ENCODE measurements at regions of chr20 and their contacts with region 1.

Region 1: DNA sequence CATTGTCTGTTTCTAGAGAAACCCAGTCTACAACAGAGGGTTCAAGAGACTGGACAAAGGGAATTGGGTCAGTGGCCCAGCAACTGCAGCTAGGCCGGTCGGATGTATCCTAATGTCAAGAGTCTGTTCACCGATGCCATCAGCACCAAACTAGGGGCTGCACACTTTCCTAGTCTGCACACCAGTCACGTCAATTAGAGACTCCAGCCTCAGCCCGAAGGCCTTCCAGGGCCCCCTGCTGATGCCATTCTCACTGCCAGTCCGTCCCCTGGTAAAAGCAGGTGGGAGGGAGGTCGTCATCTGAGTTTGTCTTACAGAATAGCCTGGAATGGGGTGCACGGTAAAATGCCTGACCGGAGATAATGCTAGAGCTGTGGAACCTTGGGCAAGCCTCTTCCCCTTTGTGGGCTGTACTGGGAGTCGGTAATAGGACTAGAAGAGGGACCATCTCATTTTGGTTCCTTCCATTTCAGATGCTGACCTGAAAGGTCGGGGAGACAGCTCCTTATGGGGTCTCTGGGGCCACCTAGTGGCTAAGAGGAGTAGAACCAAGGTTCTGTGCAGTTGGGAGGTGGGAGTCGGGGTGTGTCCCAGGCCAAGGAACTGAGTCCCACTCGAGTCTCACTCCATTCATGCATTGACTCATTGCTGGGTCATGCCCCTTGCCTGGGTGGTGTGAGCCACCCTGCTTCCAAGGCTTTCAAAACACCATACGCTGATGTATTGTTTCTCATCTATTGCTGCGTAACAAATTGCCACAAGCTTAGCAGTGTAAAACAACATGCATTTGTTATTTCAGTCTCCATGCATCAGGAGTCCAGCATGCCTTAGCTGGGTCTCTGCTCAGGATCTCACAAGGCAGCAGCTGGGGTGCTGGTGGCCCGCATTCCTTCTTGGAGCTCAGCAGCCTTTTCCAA is 5.1 kb downstream of the SOX12 start:
- DNase-seq: peak; percentile 71
- ATAC-seq: peak; percentile 27
- H3K4me3 ChIP-seq: no peak overlapping the region
- H3K27ac ChIP-seq: no peak overlapping the region
- H3K4me1 ChIP-seq: peaks cover 34% of the 10 kb centered on the region
- H3K27me3 ChIP-seq: no peaks in the 10 kb centered on the region; a peak in 1 of 5 replicates
- CTCF ChIP-seq: peak; percentile 96
- EP300 ChIP-seq: no peak
- POLR2A ChIP-seq: peak in 1 of 2 experiments; percentile 47; a peak in 2 of 4 replicates
- RAD21 ChIP-seq: peak; percentile 92

Region 2: DNA sequence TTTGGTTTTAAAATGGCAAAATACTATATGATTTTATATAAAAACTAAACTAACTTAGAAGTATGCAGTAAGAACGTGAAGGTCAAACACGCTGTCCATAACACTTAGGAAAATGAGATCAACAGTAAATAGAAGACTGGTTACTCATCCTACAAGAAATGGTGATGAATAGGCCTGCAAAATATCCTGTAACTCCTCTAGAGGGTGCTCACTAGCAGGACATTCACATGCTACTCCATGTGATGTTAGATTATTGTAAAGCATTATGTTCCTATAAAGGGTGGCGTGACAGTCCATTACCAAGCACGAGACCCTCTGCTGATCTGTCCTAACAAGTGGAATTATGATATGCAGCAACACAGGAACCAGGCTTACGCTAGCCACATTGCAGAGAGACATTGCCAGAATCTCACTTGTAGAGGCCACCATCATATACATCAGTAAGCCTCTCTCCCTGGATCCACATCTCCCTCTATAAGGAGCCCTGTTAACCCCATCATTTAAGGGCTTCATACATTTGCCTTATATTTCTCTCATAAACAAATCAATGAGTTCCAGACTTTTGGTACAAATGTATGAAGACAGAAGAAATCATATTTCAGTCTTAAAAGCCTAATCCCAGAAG is 121.4 kb before region 1 on chr20:
- CTCF ChIA-PET with region 1: interaction called, 8 read pairs
- POLR2A ChIA-PET with region 1: no interaction called
- in situ Hi-C with region 1: no loop called
- intact Hi-C with region 1: loop called (anchors 1 kb)
- DNase-seq: peak; percentile 64
- ATAC-seq: peak; percentile 92
- H3K4me3 ChIP-seq: no peak overlapping the region
- H3K27ac ChIP-seq: no peak overlapping the region
- H3K4me1 ChIP-seq: no peaks in the 10 kb centered on the region
- H3K27me3 ChIP-seq: peaks cover 1 to 27% of the 10 kb centered on the region in 2 experiments; a peak in 4 of 5 replicates
- CTCF ChIP-seq: peak; percentile 85
- EP300 ChIP-seq: no peak
- POLR2A ChIP-seq: no peak
- RAD21 ChIP-seq: peak; percentile 47

Region 3: GRCh38 chr20:237489-237888 is 93.0 kb before region 1 on chr20:
- CTCF ChIA-PET with region 1: no interaction called
- POLR2A ChIA-PET with region 1: no interaction called
- in situ Hi-C with region 1: no loop called
- intact Hi-C with region 1: no loop called
- DNase-seq: no peak
- ATAC-seq: no peak
- H3K4me3 ChIP-seq: no peak overlapping the region
- H3K27ac ChIP-seq: no peak overlapping the region
- H3K4me1 ChIP-seq: no peaks in the 10 kb centered on the region
- H3K27me3 ChIP-seq: peaks cover 2 to 15% of the 10 kb centered on the region in 2 experiments; a peak in 3 of 5 replicates
- CTCF ChIP-seq: no peak
- EP300 ChIP-seq: no peak
- POLR2A ChIP-seq: no peak
- RAD21 ChIP-seq: no peak

Region 4: GRCh38 chr20:258963-259362 is 71.5 kb before region 1 on chr20:
- CTCF ChIA-PET with region 1: interaction called, 12 read pairs
- POLR2A ChIA-PET with region 1: no interaction called
- in situ Hi-C with region 1: no loop called
- intact Hi-C with region 1: loop called (anchors 1 kb)
- DNase-seq: peak; percentile 67
- ATAC-seq: peak; percentile 92
- H3K4me3 ChIP-seq: no peak overlapping the region
- H3K27ac ChIP-seq: no peak overlapping the region
- H3K4me1 ChIP-seq: no peaks in the 10 kb centered on the region
- H3K27me3 ChIP-seq: peaks cover 6 to 36% of the 10 kb centered on the region in 2 experiments; a peak in 4 of 5 replicates
- CTCF ChIP-seq: peak; percentile 71
- EP300 ChIP-seq: no peak
- POLR2A ChIP-seq: no peak
- RAD21 ChIP-seq: peak; percentile 59

Region 5: DNA sequence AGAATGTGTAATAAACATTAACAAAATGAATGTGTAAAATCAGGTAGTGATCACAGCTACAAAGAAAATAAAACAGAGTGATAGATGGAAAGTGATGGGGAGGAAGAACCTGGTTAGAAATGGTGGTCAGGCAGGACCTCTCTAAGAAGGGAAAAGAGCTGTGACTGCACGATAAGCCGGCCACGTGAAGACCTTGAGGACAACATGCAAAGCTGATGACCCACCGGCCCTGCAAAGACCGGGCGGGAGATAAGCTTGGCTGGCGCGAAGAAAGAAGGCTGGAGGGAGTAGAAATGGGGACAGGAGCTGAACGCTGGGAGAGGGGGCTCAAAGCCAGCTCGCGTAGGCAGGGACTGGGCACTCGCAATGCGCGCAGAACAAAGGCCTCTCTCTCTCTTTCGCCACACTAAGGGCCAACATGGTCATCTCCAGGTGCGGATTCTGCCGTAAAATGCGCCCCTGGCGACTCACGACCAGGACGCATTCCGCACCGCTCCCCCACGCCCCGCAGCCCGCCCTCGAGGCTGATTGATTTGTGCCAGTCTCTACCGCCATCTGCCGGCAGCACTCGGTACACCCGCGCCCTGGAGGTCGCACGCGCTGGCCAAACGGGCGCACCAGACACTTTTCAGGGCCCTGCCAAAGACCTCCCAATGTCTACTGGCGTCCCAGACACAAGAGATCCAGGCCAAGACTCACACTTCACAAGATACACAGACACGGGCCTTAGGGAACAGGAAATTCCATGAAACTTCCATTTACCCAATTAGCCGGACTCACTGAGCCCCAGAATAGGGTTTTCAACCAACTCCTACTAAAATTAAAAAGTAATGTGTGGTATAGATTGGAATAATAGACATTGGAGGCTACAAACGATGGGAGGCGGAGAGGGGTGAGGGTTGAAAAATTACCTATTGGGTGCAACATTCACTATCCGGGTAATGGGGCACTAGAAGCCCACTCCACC is 63.6 kb before region 1 on chr20:
- CTCF ChIA-PET with region 1: interaction called, 18 read pairs
- POLR2A ChIA-PET with region 1: interaction called, 6 read pairs
- in situ Hi-C with region 1: no loop called
- intact Hi-C with region 1: loop called (anchors 2 kb)
- DNase-seq: peak; percentile 92
- ATAC-seq: peak; percentile 89
- H3K4me3 ChIP-seq: peak overlapping the region; percentile 43 to 65 (median 44)
- H3K27ac ChIP-seq: no peak overlapping the region
- H3K4me1 ChIP-seq: peaks cover 9% of the 10 kb centered on the region
- H3K27me3 ChIP-seq: peaks cover 8 to 35% of the 10 kb centered on the region in 2 experiments; a peak in 4 of 5 replicates
- CTCF ChIP-seq: peak; percentile 100
- EP300 ChIP-seq: peak in 1 of 2 experiments; percentile 18; a peak in 1 of 4 replicates
- POLR2A ChIP-seq: peak; percentile 79 to 80
- RAD21 ChIP-seq: peak; percentile 99

Measured in HepG2 (cell line).